ENCODE measurements at regions of chr22 and their contacts with region 1.

Region 1: GRCh38 chr22:20957316-20958101 is 9.5 kb upstream of the AIFM3 start:
- DNase-seq: peak in 1 of 2 experiments; percentile 70
- H3K4me3 ChIP-seq: peak overlapping the region; percentile 68 to 79 (median 74)
- H3K27ac ChIP-seq: no peak overlapping the region
- H3K4me1 ChIP-seq: peaks cover 0 to 9% (median 5%) of the 10 kb centered on the region in 4 experiments; a peak in 6 of 7 replicates
- H3K27me3 ChIP-seq: peaks cover 0 to 9% (median 5%) of the 10 kb centered on the region in 4 experiments; a peak in 5 of 7 replicates
- CTCF ChIP-seq: no peak
- EP300 ChIP-seq: no peak
- POLR2A ChIP-seq: no peak
- RAD21 ChIP-seq: no peak

Region 2: DNA sequence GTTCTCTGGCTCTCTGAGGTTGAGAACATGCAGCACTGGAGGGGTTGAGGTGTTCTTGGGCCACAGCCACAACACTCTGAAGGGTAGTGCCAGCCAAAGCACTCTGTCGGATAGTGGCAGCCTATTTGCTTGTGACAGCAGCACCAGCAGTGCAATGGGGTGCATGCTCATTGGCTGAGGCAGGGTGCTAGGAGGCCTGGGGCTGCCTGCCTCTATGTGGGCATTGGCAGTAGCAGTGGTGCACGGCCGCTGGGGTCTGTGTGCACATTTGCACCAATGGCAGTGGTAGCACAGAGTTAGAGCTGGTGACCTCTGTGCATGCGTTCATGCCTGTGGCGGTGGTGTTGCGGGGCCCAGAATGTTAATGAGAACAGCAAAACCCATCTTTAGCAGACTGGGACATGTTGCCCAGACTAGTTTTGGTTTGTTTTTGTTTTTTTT is 124.3 kb before region 1 on chr22:
- CTCF ChIA-PET with region 1: no interaction called
- POLR2A ChIA-PET with region 1: no interaction called
- DNase-seq: no peak
- H3K4me3 ChIP-seq: no peak overlapping the region
- H3K27ac ChIP-seq: no peak overlapping the region
- H3K4me1 ChIP-seq: no peaks in the 10 kb centered on the region
- H3K27me3 ChIP-seq: no peaks in the 10 kb centered on the region
- CTCF ChIP-seq: no peak
- EP300 ChIP-seq: no peak
- POLR2A ChIP-seq: no peak
- RAD21 ChIP-seq: no peak

Region 3: DNA sequence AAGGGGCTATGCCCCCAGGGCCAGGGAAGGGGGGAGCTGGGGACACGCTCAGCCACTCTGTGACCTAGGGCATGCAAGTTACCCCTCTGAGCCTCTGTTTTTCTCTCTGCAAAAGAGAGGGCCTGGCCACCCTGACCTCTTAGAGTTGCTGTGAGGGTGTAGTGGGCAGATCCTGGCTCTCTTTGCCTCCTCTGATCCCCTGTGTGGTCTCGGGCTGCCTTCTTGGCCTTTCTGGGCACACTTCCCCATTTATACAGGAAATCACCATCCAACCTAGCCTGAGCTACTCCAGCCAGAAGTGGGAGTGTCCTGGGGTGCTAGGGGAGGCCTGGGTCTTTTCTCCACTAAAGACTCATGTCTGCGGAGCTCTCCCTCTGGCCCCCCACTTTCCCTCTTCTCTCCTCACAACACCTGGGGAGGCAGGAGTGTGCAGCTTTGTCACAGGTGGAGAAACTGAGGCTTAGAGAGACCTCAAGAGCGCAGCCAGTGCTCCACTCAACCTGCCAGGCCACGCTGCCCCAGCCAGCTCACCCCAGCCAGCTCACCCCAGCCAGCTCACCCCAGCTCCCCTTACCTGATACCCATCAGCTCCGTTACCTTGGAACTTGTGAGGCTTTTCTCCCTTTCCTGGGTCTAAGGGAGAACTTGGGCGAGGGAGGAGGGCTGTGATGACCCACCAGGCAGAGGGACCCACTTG is 10.9 kb after region 1 on chr22:
- CTCF ChIA-PET with region 1: interaction called, 115 read pairs
- POLR2A ChIA-PET with region 1: interaction called, 6 read pairs
- DNase-seq: peak in 1 of 2 experiments; percentile 54
- H3K4me3 ChIP-seq: peak overlapping the region in 1 of 4 experiments; percentile 39; a peak in 2 of 8 replicates
- H3K27ac ChIP-seq: no peak overlapping the region
- H3K4me1 ChIP-seq: peaks cover 0 to 19% (median 13%) of the 10 kb centered on the region in 4 experiments; a peak in 6 of 7 replicates
- H3K27me3 ChIP-seq: peaks cover 31 to 64% (median 50%) of the 10 kb centered on the region in 4 experiments
- CTCF ChIP-seq: no peak
- EP300 ChIP-seq: no peak
- POLR2A ChIP-seq: no peak
- RAD21 ChIP-seq: no peak

Region 4: GRCh38 chr22:21082248-21082647 is 124.7 kb after region 1 on chr22:
- CTCF ChIA-PET with region 1: no interaction called
- POLR2A ChIA-PET with region 1: no interaction called
- DNase-seq: no peak
- H3K4me3 ChIP-seq: no peak overlapping the region
- H3K27ac ChIP-seq: no peak overlapping the region
- H3K4me1 ChIP-seq: no peaks in the 10 kb centered on the region; a peak in 1 of 7 replicates
- H3K27me3 ChIP-seq: no peaks in the 10 kb centered on the region
- CTCF ChIP-seq: no peak
- EP300 ChIP-seq: no peak
- POLR2A ChIP-seq: no peak
- RAD21 ChIP-seq: no peak

Measured in H1 (cell line).